Right lobe of liver (tissue), 6 donors: ENCODE measurements at regions of chr5 and their contacts with region 1.

Region 1: DNA sequence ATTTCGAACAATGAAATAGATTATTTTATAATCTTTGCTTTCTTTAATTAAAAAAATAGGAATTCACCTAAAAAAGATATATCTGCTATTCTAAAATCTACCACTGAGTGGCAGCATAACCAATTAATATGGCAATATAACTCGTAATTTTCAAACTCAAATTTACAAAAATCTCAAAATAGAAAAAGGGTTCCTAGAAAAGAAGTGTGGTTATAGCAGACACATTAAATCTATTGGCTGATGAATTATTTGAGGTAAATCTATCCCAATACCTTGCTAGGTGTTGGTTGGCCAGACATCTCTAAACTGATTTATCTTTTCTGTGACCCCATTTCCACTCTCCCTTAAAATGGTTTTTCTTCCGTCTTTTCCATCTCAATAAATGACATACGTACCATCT is 30.2 kb upstream of the NRG2 start:
- DNase-seq: no peak
- ATAC-seq: peak in 1 of 4 donors; percentile 33
- H3K4me3 ChIP-seq: no peak overlapping the region
- H3K27ac ChIP-seq: no peak overlapping the region
- H3K4me1 ChIP-seq: no peaks in the 10 kb centered on the region
- H3K27me3 ChIP-seq: no peaks in the 10 kb centered on the region
- CTCF ChIP-seq: peak; percentile 55 to 75 (median 65)
- POLR2A ChIP-seq: no peak

Region 2: DNA sequence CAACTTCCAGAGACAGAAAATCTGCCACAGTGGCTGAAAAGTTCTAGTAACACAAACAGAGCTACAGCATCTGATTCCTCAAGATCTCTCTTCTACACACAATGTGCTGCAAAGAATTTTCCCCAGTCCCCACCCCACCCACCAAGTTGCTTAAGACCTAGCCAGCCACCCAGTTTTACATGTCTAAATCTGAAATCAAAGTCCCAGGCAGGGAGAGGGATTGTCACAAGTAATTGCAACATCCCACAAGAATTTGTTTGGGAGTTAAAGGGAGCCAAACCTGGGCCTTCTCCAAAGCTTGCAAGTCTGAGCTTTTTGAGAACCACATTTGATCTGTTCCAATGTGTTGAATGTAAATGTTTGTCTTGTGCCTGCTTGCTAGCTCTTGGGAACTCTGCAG is 67.9 kb after region 1 on chr5:
- intact Hi-C with region 1: loop called in 1 of 2 experiments (anchors 5 kb)
- DNase-seq: no peak
- ATAC-seq: peak in 3 of 4 donors; percentile 27 to 47 (median 31)
- H3K4me3 ChIP-seq: no peak overlapping the region
- H3K27ac ChIP-seq: peak overlapping the region in 1 of 3 donors; percentile 33
- H3K4me1 ChIP-seq: peaks cover 0 to 48% (median 8%) of the 10 kb centered on the region in 4 donors
- H3K27me3 ChIP-seq: no peaks in the 10 kb centered on the region
- CTCF ChIP-seq: no peak
- POLR2A ChIP-seq: no peak

Region 3: DNA sequence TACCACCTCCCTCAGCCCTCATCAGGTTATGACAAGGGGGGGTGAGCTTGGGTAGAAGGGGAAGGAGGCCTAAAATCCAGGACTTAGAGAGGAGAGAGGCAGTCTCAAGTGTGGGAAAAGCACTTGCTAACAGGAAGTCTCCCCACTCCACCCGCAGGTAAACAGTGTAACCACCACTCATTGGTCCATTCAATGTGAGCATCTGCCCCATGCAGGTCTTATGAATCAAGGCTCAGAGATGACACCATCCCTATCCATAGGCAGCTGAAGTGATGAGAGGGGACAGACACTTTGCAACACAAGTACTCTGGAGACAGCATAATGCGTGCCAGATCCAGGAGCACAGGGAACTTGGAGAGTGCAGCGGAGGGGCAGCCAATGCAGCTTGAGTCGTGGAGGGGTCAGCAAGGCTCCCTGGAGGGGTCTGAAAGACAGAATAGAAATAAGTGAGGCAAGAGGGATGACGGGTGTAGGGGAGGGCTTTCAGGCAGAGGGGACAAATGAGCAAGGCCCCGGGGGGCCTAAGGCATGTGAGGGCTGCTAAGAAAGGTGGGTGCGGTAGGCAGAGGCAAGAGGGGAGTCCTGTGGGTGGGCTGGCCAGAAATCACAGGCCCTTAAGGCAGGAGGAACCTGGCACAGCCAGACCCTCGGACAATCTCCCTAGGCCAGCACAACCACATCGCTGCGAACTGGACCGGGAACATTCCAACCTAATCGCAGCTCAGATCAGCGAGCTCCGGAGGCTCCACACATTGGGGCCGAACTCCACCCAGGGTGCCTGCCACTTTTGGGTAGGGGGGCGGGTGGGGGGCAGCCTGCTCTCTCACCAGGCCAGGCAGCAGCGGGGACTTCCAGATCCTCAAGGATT is 78.7 kb after region 1 on chr5:
- intact Hi-C with region 1: loop called (anchors 5 kb)
- DNase-seq: peak in 1 of 3 donors; percentile 35
- ATAC-seq: no peak
- H3K4me3 ChIP-seq: no peak overlapping the region
- H3K27ac ChIP-seq: no peak overlapping the region
- H3K4me1 ChIP-seq: no peaks in the 10 kb centered on the region
- H3K27me3 ChIP-seq: no peaks in the 10 kb centered on the region
- CTCF ChIP-seq: no peak
- POLR2A ChIP-seq: no peak